GM10248 (cell line): ENCODE measurements at regions of chr19 and their contacts with region 1.

Region 1: GRCh38 chr19:18328340-18329034 is 5.6 kb upstream of the LSM4 start:
- DNase-seq: peak; percentile 95
- CTCF ChIP-seq: peak; percentile 83

Region 2: GRCh38 chr19:18156841-18157464 is 171.5 kb before region 1 on chr19:
- CTCF ChIA-PET with region 1: no interaction called
- POLR2A ChIA-PET with region 1: no interaction called
- DNase-seq: no peak
- CTCF ChIP-seq: no peak

Region 3: GRCh38 chr19:18251587-18252369 is 76.7 kb before region 1 on chr19:
- CTCF ChIA-PET with region 1: interaction called, 22 read pairs
- POLR2A ChIA-PET with region 1: no interaction called
- DNase-seq: peak; percentile 89
- CTCF ChIP-seq: peak; percentile 92

Region 4: DNA sequence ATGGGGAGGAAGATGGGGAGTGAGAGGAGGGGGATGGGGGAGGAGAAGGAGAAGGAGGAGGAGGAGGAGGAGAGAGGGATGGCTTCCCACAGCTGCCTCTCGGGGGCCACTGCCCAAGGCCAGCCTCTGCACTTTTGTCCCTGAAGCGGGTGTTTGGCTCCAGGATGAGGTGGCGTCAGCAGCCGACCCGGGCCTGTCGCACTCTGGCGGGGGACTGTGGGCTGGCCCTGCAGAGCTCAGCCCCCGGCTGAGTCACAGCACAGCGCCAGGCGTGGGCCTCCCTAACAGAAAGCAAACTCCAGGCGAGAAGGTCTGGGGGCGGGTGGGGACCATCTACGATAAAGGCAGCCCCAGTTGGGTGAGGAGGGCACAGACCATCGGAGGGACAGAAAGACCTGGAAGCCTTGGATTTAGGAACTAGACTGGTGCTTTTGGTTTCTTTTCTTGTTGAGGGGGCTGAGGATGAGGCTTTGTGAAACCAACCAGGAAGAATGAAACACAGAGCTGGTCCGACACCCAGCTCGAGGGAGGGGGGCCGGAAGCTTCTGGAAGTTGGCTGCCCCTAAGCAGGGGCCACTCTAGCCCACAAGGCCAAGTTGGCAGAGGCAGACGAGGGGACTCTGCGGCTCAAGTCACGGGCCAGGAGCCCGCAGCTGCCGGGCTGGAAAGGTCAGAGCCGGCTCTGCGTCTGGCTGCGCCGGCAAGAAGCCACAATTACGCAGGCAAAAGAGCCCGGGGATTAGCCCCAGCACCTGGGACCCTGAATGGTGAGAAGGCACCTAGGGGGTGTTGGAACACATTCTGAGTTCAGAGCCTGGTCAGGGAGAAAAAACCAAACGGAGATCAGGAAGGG is 23.8 kb before region 1 on chr19:
- CTCF ChIA-PET with region 1: interaction called, 10 read pairs
- POLR2A ChIA-PET with region 1: interaction called, 5 read pairs
- DNase-seq: peak; percentile 89
- CTCF ChIP-seq: no peak

Region 5: DNA sequence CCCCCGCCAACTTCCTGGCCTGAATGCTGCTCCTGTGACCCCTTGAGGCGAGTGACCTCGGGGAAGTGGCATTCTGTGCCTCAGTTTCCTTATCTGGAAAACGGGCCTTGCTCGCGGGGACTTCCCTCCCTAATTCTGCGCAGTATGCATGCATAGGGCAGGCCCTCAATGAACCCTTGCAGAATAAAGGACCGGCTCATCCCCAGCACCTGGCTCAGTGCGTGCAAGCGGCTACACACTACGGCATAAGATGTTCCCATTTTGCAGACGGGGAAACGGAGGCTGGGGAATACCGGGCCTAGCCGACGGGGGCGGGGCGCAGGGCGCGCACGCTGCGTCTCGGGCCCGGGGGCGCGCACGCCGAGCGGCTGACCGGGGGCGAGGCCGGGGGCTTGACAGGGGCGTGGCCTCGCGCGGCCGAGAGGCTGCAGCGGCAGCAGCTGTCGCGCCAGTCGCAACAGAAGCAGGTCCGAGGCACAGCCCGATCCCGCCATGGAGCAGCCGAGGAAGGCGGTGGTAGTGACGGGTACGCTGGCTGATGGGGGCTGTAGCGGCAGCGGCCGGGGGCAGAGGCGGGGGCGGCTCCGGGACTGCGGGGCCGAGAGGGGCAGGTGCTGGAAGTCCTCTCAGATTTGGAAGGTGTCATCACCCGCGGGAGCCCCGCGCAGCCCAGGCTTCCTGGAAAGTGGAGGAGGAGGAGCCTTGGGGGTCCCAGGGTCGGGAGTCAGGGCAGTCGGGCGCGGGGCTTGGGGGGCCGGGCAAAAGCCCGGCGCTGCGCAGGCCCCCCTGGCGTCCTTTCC is 11.9 kb after region 1 on chr19 and contains the start of gene PGPEP1:
- CTCF ChIA-PET with region 1: interaction called, 104 read pairs
- POLR2A ChIA-PET with region 1: no interaction called
- DNase-seq: peak; percentile 91
- CTCF ChIP-seq: no peak

Region 6: GRCh38 chr19:18364826-18365528 is 36.5 kb after region 1 on chr19:
- CTCF ChIA-PET with region 1: interaction called, 18 read pairs
- POLR2A ChIA-PET with region 1: no interaction called
- DNase-seq: no peak
- CTCF ChIP-seq: no peak

Region 7: GRCh38 chr19:18388100-18388959 is 59.8 kb after region 1 on chr19:
- CTCF ChIA-PET with region 1: interaction called, 13 read pairs
- POLR2A ChIA-PET with region 1: no interaction called
- DNase-seq: peak; percentile 93
- CTCF ChIP-seq: peak; percentile 100

Region 8: DNA sequence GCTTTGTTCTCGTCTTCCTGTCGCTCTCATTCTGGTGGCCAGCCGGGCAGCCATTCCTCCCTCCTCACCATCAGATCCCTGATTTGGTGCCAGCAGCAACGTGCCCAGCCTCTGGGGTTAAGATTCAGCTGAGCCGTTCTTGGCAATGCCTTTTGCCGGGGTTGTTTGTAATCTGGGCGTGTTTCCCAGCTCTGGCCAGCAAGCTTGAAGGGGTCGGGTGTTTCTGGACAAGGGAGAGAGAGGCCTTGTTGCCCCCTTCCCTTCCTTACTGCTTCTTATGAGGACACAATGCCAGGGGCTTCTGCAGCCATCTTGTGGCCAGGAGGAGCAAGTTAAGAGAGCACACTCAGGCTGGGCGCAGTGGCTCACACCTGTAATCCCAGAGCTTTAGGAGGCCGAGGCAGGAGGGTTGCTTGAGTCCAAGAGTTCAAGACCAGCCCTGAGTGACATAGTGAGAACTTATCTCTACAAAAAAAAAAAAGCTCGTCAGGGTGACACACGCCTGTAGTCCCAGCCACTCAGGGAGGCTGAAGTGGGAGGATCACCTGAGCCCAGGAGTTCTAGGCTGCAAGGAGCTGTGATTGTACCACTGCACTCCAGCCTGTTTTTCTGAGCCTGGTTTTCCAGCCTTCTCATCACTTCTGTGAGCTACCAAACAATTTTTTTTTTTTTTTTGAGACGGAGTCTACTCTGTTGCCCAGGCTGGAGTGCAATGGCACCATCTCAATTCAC is 344.3 kb after region 1 on chr19:
- CTCF ChIA-PET with region 1: no interaction called
- POLR2A ChIA-PET with region 1: no interaction called
- DNase-seq: no peak
- CTCF ChIP-seq: no peak